ENCODE measurements at regions of chr7 and their contacts with region 1.

Region 1: GRCh38 chr7:99171731-99172130 is 27.8 kb upstream of the SMURF1 start:
- DNase-seq: no peak
- ATAC-seq: no peak
- H3K4me3 ChIP-seq: no peak overlapping the region
- H3K27ac ChIP-seq: no peak overlapping the region
- H3K4me1 ChIP-seq: peaks cover 44% of the 10 kb centered on the region
- H3K27me3 ChIP-seq: no peaks in the 10 kb centered on the region
- CTCF ChIP-seq: no peak
- EP300 ChIP-seq: no peak
- POLR2A ChIP-seq: no peak
- RAD21 ChIP-seq: no peak

Region 2: GRCh38 chr7:99190359-99191032 is 18.8 kb after region 1 on chr7:
- CTCF ChIA-PET with region 1: no interaction called
- POLR2A ChIA-PET with region 1: interaction called, 11 read pairs
- in situ Hi-C with region 1: no loop called
- intact Hi-C with region 1: loop called (anchors 2 kb)
- DNase-seq: peak; percentile 71
- ATAC-seq: peak; percentile 86
- H3K4me3 ChIP-seq: no peak overlapping the region
- H3K27ac ChIP-seq: no peak overlapping the region
- H3K4me1 ChIP-seq: peaks cover 37% of the 10 kb centered on the region
- H3K27me3 ChIP-seq: no peaks in the 10 kb centered on the region
- CTCF ChIP-seq: no peak
- EP300 ChIP-seq: peak in 1 of 2 experiments; percentile 67; a peak in 2 of 4 replicates
- POLR2A ChIP-seq: no peak
- RAD21 ChIP-seq: no peak